Activated CD4-positive, alpha-beta T cell treated with anti-CD3 and anti-CD28 coated beads for 36 hours (primary cell): ENCODE measurements at regions of chr12 and their contacts with region 1.

Region 1: GRCh38 chr12:66144791-66145754 is 14.5 kb upstream of the LLPH start:
- DNase-seq: peak; percentile 8
- ATAC-seq: peak; percentile 75
- H3K4me3 Mint-ChIP-seq: no peak overlapping the region
- H3K27ac Mint-ChIP-seq: peak overlapping the region; percentile 61
- H3K4me1 Mint-ChIP-seq: peaks cover 16% of the 10 kb centered on the region
- H3K27me3 Mint-ChIP-seq: no peaks in the 10 kb centered on the region

Region 2: DNA sequence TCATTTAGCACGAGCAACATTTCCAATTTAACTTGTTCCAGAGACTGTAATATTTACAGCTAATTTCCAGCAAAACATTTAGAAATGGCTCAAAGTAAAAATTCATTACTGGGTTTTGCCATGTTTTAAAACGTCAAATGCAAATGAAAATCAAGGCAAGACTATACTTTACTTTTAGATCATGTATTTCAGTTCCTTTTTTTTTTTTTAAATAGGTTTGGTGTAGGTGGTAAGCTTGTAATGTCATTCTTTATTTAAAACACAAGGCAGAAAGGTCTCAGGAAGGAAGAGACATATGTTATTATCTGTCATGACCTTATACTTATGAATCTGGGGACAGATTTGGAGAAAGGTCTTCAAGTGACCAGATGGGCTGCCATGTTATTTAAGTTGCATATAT is 479.7 kb after region 1 on chr12:
- CTCF ChIA-PET with region 1: no interaction called
- POLR2A ChIA-PET with region 1: no interaction called
- intact Hi-C with region 1: no loop called
- DNase-seq: no peak
- ATAC-seq: no peak
- H3K4me3 Mint-ChIP-seq: no peak overlapping the region
- H3K27ac Mint-ChIP-seq: no peak overlapping the region
- H3K4me1 Mint-ChIP-seq: no peaks in the 10 kb centered on the region
- H3K27me3 Mint-ChIP-seq: no peaks in the 10 kb centered on the region

Region 3: DNA sequence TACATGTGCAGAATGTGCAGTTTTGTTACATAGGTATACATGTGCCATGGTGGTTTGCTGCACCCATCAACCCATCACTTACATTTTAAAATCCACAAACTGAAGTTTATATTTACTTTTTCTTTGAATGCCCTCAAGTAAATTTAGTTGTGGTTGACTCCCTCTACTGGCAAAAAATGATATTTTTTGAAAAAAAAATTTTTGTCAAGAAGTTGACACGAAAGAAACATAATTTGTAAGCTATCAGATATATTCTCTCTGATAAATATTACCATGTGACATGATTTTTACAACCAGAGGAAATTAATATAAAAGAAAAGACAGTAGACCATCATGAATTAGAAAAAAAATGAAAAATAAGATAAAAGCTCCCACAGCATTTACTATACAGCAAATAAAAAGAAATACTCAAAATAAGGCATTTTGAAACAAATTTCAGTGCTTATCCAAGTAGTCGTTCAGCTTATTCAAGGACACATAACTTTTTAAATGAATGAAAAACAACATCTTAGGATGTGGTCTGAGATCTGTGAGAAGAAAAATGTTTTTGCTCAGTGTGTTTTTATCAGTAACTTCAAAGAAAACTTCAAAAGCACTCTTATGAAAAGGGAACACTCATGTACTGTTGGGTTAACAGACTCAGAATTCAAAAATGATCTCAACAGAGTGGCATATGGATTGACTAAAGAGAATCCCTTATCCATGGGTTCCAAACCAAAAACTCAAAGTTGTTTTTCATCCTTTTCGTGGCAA is 563.8 kb after region 1 on chr12:
- CTCF ChIA-PET with region 1: no interaction called
- POLR2A ChIA-PET with region 1: no interaction called
- intact Hi-C with region 1: loop called (anchors 5 kb)
- DNase-seq: no peak
- ATAC-seq: peak; percentile 33
- H3K4me3 Mint-ChIP-seq: no peak overlapping the region
- H3K27ac Mint-ChIP-seq: no peak overlapping the region
- H3K4me1 Mint-ChIP-seq: peaks cover 23% of the 10 kb centered on the region
- H3K27me3 Mint-ChIP-seq: peaks cover 2% of the 10 kb centered on the region